ENCODE measurements at regions of chr1 and their contacts with region 1.

Region 1: GRCh38 chr1:43073490-43074230 is 98.4 kb downstream of the EBNA1BP2 start:
- DNase-seq: peak; percentile 87
- H3K4me3 Mint-ChIP-seq: no peak overlapping the region
- H3K27ac Mint-ChIP-seq: peak overlapping the region; percentile 28
- H3K4me1 Mint-ChIP-seq: peaks cover 4% of the 10 kb centered on the region
- H3K27me3 Mint-ChIP-seq: no peaks in the 10 kb centered on the region

Region 2: DNA sequence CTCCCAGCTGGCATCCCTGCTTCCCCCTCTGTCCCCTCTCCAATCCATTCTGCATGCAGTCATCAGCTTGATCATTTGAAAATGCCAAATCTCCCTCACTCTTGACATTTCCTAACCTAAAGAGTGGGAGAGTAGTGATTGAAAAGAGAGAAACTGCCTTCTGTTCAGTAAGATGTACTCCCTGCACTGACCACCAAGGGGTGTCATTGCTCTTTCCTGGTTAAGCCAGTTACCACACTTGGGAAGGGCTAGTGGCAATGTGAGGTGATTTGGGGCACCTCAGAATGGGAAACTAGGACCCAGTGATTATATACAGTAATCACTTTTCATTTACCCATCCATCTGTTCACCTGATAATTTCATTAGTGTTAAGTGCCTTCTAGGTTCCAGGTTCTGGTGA is 295.8 kb before region 1 on chr1:
- CTCF ChIA-PET with region 1: interaction called, 32 read pairs
- intact Hi-C with region 1: loop called (anchors 1 kb)
- DNase-seq: peak; percentile 61
- H3K4me3 Mint-ChIP-seq: no peak overlapping the region
- H3K27ac Mint-ChIP-seq: no peak overlapping the region
- H3K4me1 Mint-ChIP-seq: peaks cover 6% of the 10 kb centered on the region
- H3K27me3 Mint-ChIP-seq: no peaks in the 10 kb centered on the region

Region 3: GRCh38 chr1:42924082-42924850 is 149.4 kb before region 1 on chr1:
- CTCF ChIA-PET with region 1: interaction called, 441 read pairs
- intact Hi-C with region 1: loop called (anchors 1 kb)
- DNase-seq: peak; percentile 95
- H3K4me3 Mint-ChIP-seq: peak overlapping the region; percentile 92
- H3K27ac Mint-ChIP-seq: peak overlapping the region; percentile 88
- H3K4me1 Mint-ChIP-seq: peaks cover 23% of the 10 kb centered on the region
- H3K27me3 Mint-ChIP-seq: no peaks in the 10 kb centered on the region

Region 4: GRCh38 chr1:42952303-42953001 is 121.2 kb before region 1 on chr1:
- CTCF ChIA-PET with region 1: interaction called, 10 read pairs
- intact Hi-C with region 1: no loop called
- DNase-seq: no peak
- H3K4me3 Mint-ChIP-seq: no peak overlapping the region
- H3K27ac Mint-ChIP-seq: peak overlapping the region; percentile 48
- H3K4me1 Mint-ChIP-seq: peaks cover 84% of the 10 kb centered on the region
- H3K27me3 Mint-ChIP-seq: no peaks in the 10 kb centered on the region

Region 5: GRCh38 chr1:43253173-43253572 is 179.5 kb after region 1 on chr1:
- CTCF ChIA-PET with region 1: no interaction called
- intact Hi-C with region 1: no loop called
- DNase-seq: no peak
- H3K4me3 Mint-ChIP-seq: no peak overlapping the region
- H3K27ac Mint-ChIP-seq: no peak overlapping the region
- H3K4me1 Mint-ChIP-seq: no peaks in the 10 kb centered on the region
- H3K27me3 Mint-ChIP-seq: no peaks in the 10 kb centered on the region

Region 6: DNA sequence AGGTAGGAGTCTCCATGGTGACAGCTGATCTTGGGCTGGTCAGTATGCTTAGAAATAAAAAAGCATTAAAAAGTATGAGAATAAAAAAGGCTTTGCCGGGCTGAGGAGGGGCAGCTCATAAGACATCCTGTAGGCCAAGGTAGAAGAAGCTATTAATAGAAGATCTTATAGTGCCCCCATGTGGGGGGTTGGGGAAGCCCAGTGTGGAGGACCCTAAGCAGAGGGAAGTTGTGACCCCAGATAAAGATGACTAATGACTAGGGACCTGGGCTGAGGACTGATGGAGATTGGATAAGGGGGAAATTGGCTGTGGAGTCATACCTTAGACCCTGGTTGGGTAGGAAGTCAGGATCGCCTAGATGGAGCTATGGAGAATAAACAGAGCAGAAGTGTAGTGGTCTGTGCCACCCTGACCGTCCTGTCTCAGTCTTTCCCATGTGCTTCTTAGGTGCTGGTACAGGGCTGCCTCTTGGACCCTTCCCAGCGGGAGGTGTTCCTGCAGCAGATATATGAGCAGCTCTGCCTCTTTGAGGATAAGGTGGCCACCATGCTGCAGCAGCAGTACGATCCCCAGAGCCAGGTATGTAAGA is 341.1 kb after region 1 on chr1:
- CTCF ChIA-PET with region 1: no interaction called
- intact Hi-C with region 1: loop called (anchors 10 kb)
- DNase-seq: peak; percentile 73
- H3K4me3 Mint-ChIP-seq: no peak overlapping the region
- H3K27ac Mint-ChIP-seq: no peak overlapping the region
- H3K4me1 Mint-ChIP-seq: no peaks in the 10 kb centered on the region
- H3K27me3 Mint-ChIP-seq: no peaks in the 10 kb centered on the region

Measured in activated naive CD4-positive, alpha-beta T cell treated with anti-CD3 and anti-CD28 coated beads for 36 hours (primary cell).